Common myeloid progenitor, CD34-positive (primary cell): ENCODE measurements at regions of chr1 and their contacts with region 1.

Region 1: GRCh38 chr1:159891275-159892157 is 8.4 kb downstream of the CFAP45 start:
- DNase-seq: peak; percentile 82 to 86 (median 85)
- H3K4me3 ChIP-seq: no peak overlapping the region
- H3K27ac ChIP-seq: no peak overlapping the region
- H3K4me1 ChIP-seq: peaks cover 10 to 29% (median 19%) of the 10 kb centered on the region in 4 experiments
- H3K27me3 ChIP-seq: no peaks in the 10 kb centered on the region

Region 2: GRCh38 chr1:159214149-159214760 is 677.3 kb before region 1 on chr1:
- CTCF ChIA-PET with region 1: interaction called, 39 read pairs
- POLR2A ChIA-PET with region 1: no interaction called
- DNase-seq: peak; percentile 40 to 57 (median 48)
- H3K4me3 ChIP-seq: no peak overlapping the region
- H3K27ac ChIP-seq: no peak overlapping the region
- H3K4me1 ChIP-seq: peaks cover 0 to 3% (median 0%) of the 10 kb centered on the region in 4 experiments
- H3K27me3 ChIP-seq: peaks cover 0 to 9% (median 0%) of the 10 kb centered on the region in 5 experiments

Region 3: DNA sequence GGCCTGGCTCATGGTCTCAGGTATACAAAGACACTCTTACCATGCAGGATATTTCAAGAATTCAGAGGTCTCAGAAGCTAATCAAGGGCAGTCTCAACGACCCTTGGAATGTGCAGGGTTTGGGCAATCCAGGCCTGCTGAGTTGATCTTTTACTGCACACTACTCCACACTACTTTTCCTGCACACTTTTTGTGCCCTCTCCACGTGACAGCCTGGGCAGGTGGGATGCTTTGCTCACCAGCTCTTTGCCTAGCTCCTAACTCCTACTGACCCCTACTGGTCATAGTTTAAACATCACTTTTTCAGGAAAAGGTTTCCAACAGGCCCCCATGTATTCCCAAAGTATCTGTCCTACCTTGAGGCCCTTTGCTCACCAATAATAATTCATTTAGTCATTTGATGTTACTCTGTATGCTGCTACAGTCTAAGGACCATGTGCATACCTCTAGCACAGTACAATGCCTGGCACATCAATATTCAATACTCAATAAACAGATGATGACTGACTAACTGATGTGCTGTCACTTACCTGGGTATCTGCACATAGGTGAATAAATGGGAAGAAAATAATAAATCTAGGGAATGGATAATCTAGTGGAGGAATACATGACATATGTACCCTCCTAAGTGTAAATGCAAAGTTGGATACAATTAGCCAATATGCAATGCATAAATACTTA is 101.1 kb before region 1 on chr1:
- CTCF ChIA-PET with region 1: interaction called, 411 read pairs
- POLR2A ChIA-PET with region 1: no interaction called
- DNase-seq: peak in 2 of 3 donors; percentile 26
- H3K4me3 ChIP-seq: no peak overlapping the region
- H3K27ac ChIP-seq: no peak overlapping the region
- H3K4me1 ChIP-seq: peaks cover 0 to 19% (median 8%) of the 10 kb centered on the region in 4 experiments
- H3K27me3 ChIP-seq: peaks cover 0 to 4% (median 0%) of the 10 kb centered on the region in 5 experiments

Region 4: DNA sequence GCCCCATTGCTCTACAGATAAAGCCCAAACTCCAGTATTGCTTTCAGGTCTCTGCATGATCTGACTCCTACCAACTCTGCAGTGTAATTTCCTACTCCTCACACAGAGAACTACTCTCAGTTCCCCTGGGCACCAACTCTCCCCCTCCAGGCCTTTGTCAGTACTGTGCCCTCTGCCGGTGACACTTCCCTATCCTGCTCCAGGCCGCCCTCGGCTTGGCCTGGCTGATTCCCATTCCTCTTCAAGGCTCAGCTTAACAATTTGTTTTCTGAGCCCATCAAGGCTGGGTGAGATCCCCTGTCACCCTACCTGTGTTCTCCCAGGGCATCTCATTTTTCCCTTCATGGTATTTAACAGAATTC is 62.3 kb before region 1 on chr1:
- CTCF ChIA-PET with region 1: interaction called, 83 read pairs
- POLR2A ChIA-PET with region 1: interaction called, 3 read pairs
- DNase-seq: peak; percentile 68 to 81 (median 81)
- H3K4me3 ChIP-seq: no peak overlapping the region
- H3K27ac ChIP-seq: no peak overlapping the region
- H3K4me1 ChIP-seq: peaks cover 4 to 23% (median 18%) of the 10 kb centered on the region in 4 experiments
- H3K27me3 ChIP-seq: peaks cover 0 to 1% (median 0%) of the 10 kb centered on the region in 5 experiments

Region 5: DNA sequence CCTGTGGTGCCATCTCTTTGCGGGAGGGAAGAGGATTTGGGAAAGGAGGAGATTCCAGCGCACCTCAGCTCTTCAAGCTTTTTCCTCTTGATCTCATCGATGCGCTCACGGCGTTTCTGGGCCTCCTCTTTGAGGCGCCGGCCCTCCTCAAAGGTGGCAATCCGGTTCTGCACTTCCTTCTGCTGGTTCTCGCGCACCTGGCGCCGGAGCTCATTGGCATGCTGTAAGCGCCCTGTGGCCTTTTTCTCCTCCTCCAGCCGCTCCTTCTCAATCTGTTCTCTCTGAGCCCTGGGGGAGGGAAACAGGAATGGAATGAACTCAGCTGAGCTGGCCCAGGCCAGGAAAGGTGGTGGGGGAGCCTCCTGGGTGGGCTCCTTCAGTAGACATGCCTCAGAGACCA is 18.6 kb before region 1 on chr1:
- CTCF ChIA-PET with region 1: interaction called, 57 read pairs
- POLR2A ChIA-PET with region 1: no interaction called
- DNase-seq: no peak
- H3K4me3 ChIP-seq: no peak overlapping the region
- H3K27ac ChIP-seq: no peak overlapping the region
- H3K4me1 ChIP-seq: peaks cover 0 to 16% (median 8%) of the 10 kb centered on the region in 4 experiments
- H3K27me3 ChIP-seq: no peaks in the 10 kb centered on the region

Region 6: GRCh38 chr1:159936273-159936904 is 44.9 kb after region 1 on chr1:
- CTCF ChIA-PET with region 1: interaction called, 33 read pairs
- POLR2A ChIA-PET with region 1: no interaction called
- DNase-seq: peak; percentile 56 to 74 (median 66)
- H3K4me3 ChIP-seq: peak overlapping the region in 1 of 7 experiments; percentile 74
- H3K27ac ChIP-seq: no peak overlapping the region
- H3K4me1 ChIP-seq: peaks cover 8 to 37% (median 23%) of the 10 kb centered on the region in 4 experiments
- H3K27me3 ChIP-seq: no peaks in the 10 kb centered on the region

Region 7: DNA sequence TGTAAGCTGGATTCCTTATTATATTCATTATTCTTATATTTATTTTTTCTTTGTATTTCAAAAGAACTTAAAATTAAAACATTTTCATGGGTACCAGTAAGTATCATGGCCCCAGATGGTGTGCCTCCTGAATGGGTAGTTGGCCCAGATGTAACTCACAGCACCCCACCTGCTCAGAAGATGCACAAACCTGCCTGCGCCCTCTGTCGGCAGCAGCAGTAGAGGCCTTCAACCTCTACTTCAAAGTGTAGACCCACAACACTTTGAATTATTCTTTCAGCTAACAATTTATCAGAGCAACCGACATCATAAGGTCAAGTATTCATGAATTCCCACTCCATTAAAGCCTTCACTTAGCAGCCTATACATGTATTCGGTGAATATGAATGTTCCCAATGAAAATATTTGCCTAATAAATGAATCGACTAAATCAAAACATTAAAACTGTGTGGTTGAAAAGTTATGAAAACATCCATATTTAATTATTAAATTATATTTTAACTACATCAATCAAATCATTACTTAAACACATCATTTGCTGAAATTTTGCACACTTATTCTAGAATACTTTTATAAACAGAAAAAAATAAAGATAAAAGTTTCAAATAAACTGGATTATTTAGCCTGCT is 114.9 kb after region 1 on chr1:
- CTCF ChIA-PET with region 1: interaction called, 71 read pairs
- POLR2A ChIA-PET with region 1: no interaction called
- DNase-seq: peak; percentile 81 to 90 (median 89)
- H3K4me3 ChIP-seq: no peak overlapping the region
- H3K27ac ChIP-seq: no peak overlapping the region
- H3K4me1 ChIP-seq: no peaks in the 10 kb centered on the region
- H3K27me3 ChIP-seq: no peaks in the 10 kb centered on the region